ENCODE measurements at regions of chr2 and their contacts with region 1.

Region 1: DNA sequence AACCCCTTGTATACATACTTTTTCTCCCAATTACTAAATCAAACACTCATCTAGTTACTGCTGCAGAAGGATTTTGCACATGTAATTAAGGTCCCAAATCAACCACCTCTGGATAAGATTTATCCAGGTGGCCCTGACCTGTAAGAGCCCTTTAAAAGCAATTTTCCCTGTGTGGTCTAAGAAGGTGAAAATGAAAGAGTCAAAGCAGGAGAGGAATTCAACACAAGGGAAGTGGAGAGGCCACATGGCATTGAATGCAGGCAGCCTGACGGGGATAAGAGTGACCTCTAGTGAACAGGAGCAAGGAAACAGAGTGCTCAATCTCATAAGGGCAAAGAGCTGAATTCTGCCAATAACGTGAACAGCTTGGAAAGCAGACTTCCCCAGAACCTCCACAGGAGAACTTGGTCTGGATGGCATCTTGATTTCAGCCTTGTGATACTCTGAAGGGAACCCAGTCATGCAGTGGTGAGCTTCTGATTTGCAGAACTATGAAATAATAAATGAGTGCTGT is 27.2 kb downstream of the PPP3R1 start:
- DNase-seq: peak in 4 of 9 experiments; percentile 11 to 63 (median 36)
- ATAC-seq: peak; percentile 65
- H3K4me3 ChIP-seq: no peak overlapping the region
- H3K4me3 Mint-ChIP-seq: peak overlapping the region; percentile 5
- H3K27ac ChIP-seq: no peak overlapping the region
- H3K27ac Mint-ChIP-seq: peak overlapping the region; percentile 28
- H3K4me1 ChIP-seq: peaks cover 53% of the 10 kb centered on the region
- H3K4me1 Mint-ChIP-seq: peaks cover 91% of the 10 kb centered on the region
- H3K27me3 ChIP-seq: no peaks in the 10 kb centered on the region
- H3K27me3 Mint-ChIP-seq: no peaks in the 10 kb centered on the region
- CTCF ChIP-seq: no peak

Region 2: GRCh38 chr2:68088940-68089339 is 136.2 kb before region 1 on chr2:
- CTCF ChIA-PET with region 1: no interaction called
- POLR2A ChIA-PET with region 1: no interaction called
- intact Hi-C with region 1: no loop called
- DNase-seq: no peak
- ATAC-seq: no peak
- H3K4me3 ChIP-seq: no peak overlapping the region
- H3K4me3 Mint-ChIP-seq: no peak overlapping the region
- H3K27ac ChIP-seq: no peak overlapping the region
- H3K27ac Mint-ChIP-seq: no peak overlapping the region
- H3K4me1 ChIP-seq: peaks cover 6% of the 10 kb centered on the region
- H3K4me1 Mint-ChIP-seq: peaks cover 11% of the 10 kb centered on the region
- H3K27me3 ChIP-seq: no peaks in the 10 kb centered on the region
- H3K27me3 Mint-ChIP-seq: no peaks in the 10 kb centered on the region
- CTCF ChIP-seq: no peak

Region 3: GRCh38 chr2:68203587-68203986 is 21.6 kb before region 1 on chr2:
- CTCF ChIA-PET with region 1: no interaction called
- POLR2A ChIA-PET with region 1: no interaction called
- intact Hi-C with region 1: loop called in 1 of 2 experiments (anchors 2 kb)
- DNase-seq: peak in 2 of 9 experiments; percentile 17 to 44
- ATAC-seq: peak; percentile 55
- H3K4me3 ChIP-seq: no peak overlapping the region
- H3K4me3 Mint-ChIP-seq: peak overlapping the region; percentile 76
- H3K27ac ChIP-seq: peak overlapping the region in 1 of 2 experiments; percentile 55
- H3K27ac Mint-ChIP-seq: peak overlapping the region; percentile 88
- H3K4me1 ChIP-seq: peaks cover 50% of the 10 kb centered on the region
- H3K4me1 Mint-ChIP-seq: peaks cover 80% of the 10 kb centered on the region
- H3K27me3 ChIP-seq: no peaks in the 10 kb centered on the region
- H3K27me3 Mint-ChIP-seq: no peaks in the 10 kb centered on the region
- CTCF ChIP-seq: no peak

Region 4: GRCh38 chr2:68238955-68239822 is 14.0 kb after region 1 on chr2:
- CTCF ChIA-PET with region 1: interaction called, 4 read pairs
- POLR2A ChIA-PET with region 1: interaction called, 3 read pairs
- intact Hi-C with region 1: loop called in 1 of 2 experiments (anchors 1 kb)
- DNase-seq: no peak
- ATAC-seq: no peak
- H3K4me3 ChIP-seq: no peak overlapping the region
- H3K4me3 Mint-ChIP-seq: peak overlapping the region; percentile 41
- H3K27ac ChIP-seq: peak overlapping the region in 1 of 2 experiments; percentile 3
- H3K27ac Mint-ChIP-seq: peak overlapping the region; percentile 87
- H3K4me1 ChIP-seq: peaks cover 83% of the 10 kb centered on the region
- H3K4me1 Mint-ChIP-seq: peaks cover 85% of the 10 kb centered on the region
- H3K27me3 ChIP-seq: no peaks in the 10 kb centered on the region
- H3K27me3 Mint-ChIP-seq: no peaks in the 10 kb centered on the region
- CTCF ChIP-seq: no peak

Measured in CD8-positive, alpha-beta T cell (primary cell).